ENCODE measurements at regions of chr15 and their contacts with region 1.

Region 1: GRCh38 chr15:42920519-42921227 is at the start of gene TTBK2:
- DNase-seq: peak; percentile 98
- H3K4me3 ChIP-seq: peak within 1 kb of the TSS; percentile 83
- H3K4me3 Mint-ChIP-seq: peak within 1 kb of the TSS; percentile 92
- H3K27ac Mint-ChIP-seq: peak within 1 kb of the TSS; percentile 56
- H3K4me1 ChIP-seq: no peaks in the 10 kb centered on the region; the same call in 1 of the 2 replicates
- H3K4me1 Mint-ChIP-seq: peaks cover 9% of the 10 kb centered on the region
- H3K27me3 ChIP-seq: no peaks in the 10 kb centered on the region
- H3K27me3 Mint-ChIP-seq: no peaks in the 10 kb centered on the region
- CTCF ChIP-seq: no peak
- total RNA-seq, gene TTBK2: 9.7 and 10.1 TPM in 2 replicates

Region 2: GRCh38 chr15:42800731-42801474 is 119.8 kb before region 1 on chr15:
- CTCF ChIA-PET with region 1: no interaction called
- POLR2A ChIA-PET with region 1: no interaction called
- intact Hi-C with region 1: loop called (anchors 2 kb)
- DNase-seq: peak in 1 of 2 experiments; percentile 29
- H3K4me3 ChIP-seq: no peak overlapping the region
- H3K4me3 Mint-ChIP-seq: no peak overlapping the region
- H3K27ac Mint-ChIP-seq: no peak overlapping the region
- H3K4me1 ChIP-seq: no peaks in the 10 kb centered on the region
- H3K4me1 Mint-ChIP-seq: no peaks in the 10 kb centered on the region
- H3K27me3 ChIP-seq: no peaks in the 10 kb centered on the region
- H3K27me3 Mint-ChIP-seq: no peaks in the 10 kb centered on the region
- CTCF ChIP-seq: peak in 1 of 2 experiments; percentile 12

Region 3: DNA sequence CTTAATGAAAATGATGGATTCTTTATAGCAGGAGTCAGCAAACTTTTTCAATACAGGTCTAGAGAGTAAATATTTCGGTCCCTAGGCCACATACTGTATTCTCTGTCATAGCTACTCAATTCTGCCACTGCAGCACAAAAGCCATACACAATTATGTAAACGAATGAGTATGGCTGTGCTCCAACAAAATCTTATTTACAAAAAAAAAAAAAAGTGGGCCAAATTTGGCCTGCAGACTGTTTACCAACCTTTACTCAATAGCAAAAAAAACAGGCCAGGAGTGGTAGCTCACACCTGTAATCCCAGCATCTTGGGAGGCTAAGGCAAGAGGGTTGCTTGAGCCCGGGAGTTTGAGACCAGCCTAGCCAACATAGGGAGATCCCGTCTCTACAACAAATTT is 41.2 kb before region 1 on chr15:
- CTCF ChIA-PET with region 1: no interaction called
- POLR2A ChIA-PET with region 1: no interaction called
- intact Hi-C with region 1: no loop called
- DNase-seq: no peak
- H3K4me3 ChIP-seq: no peak overlapping the region
- H3K4me3 Mint-ChIP-seq: no peak overlapping the region
- H3K27ac Mint-ChIP-seq: no peak overlapping the region
- H3K4me1 ChIP-seq: no peaks in the 10 kb centered on the region
- H3K4me1 Mint-ChIP-seq: no peaks in the 10 kb centered on the region
- H3K27me3 ChIP-seq: no peaks in the 10 kb centered on the region
- H3K27me3 Mint-ChIP-seq: no peaks in the 10 kb centered on the region
- CTCF ChIP-seq: no peak

Region 4: DNA sequence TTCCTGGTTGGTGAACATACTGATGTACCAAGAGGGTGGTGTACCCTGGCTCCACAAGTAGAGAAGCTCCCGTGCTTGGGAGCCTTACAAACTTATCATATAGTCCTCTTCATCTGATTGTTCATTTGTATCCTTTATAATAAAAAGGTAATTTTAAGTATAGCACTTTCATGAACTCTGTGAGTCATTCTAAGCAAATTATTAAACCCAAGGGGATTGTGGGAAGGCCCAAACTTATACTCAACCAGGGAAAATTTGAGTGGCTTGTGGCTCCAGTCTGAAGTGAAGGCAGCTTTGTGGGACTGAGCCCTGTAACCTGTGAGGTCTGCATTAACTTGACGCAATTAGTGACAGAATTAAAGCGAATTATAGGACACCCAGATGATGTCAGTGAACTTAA is 29.1 kb before region 1 on chr15:
- CTCF ChIA-PET with region 1: no interaction called
- POLR2A ChIA-PET with region 1: no interaction called
- intact Hi-C with region 1: loop called (anchors 2 kb)
- DNase-seq: no peak
- H3K4me3 ChIP-seq: no peak overlapping the region
- H3K4me3 Mint-ChIP-seq: no peak overlapping the region
- H3K27ac Mint-ChIP-seq: no peak overlapping the region
- H3K4me1 ChIP-seq: peaks cover 31% of the 10 kb centered on the region
- H3K4me1 Mint-ChIP-seq: no peaks in the 10 kb centered on the region
- H3K27me3 ChIP-seq: no peaks in the 10 kb centered on the region
- H3K27me3 Mint-ChIP-seq: no peaks in the 10 kb centered on the region
- CTCF ChIP-seq: no peak